ENCODE measurements at regions of chr11 and their contacts with region 1.

Region 1: GRCh38 chr11:59857444-59858434 is 8.5 kb downstream of the TCN1 start:
- DNase-seq: peak; percentile 67 to 80
- H3K4me3 ChIP-seq: no peak overlapping the region
- H3K27ac ChIP-seq: peak overlapping the region; percentile 78
- H3K4me1 ChIP-seq: peaks cover 33% of the 10 kb centered on the region
- H3K27me3 ChIP-seq: no peaks in the 10 kb centered on the region
- CTCF ChIP-seq: no peak

Region 2: DNA sequence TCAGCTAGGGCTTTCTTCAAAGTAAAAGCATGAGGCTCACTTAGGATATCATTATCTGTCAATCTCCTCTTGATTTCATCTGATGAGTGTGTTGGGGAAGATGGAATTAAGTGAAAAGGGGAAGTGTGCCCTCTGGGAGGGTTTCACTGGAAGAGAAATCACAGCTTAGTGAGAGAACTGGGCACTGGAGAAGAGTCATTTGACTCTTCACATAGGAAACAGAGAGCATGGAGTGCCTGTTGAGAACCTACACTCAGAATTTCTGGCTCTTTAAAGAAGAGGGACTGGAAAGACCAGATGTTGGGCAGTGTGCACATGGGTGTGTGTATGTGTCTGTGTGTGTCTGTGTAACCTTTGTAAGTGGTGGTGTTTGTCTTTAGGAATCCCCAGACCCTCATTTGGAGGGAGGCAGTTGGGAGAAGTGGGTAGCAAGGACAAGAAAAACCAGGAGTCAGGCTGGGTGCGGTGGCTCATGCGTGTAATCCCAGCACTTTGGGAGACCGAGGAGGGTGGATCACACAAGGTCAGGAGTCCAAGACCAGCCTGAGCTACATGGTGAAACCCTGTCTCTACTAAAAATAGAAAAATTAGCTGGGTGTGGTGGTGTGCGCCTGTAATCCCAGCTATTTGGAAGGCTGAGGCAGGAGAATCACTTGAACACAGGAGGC is 92.5 kb before region 1 on chr11:
- CTCF ChIA-PET with region 1: no interaction called
- POLR2A ChIA-PET with region 1: no interaction called
- intact Hi-C with region 1: no loop called
- DNase-seq: no peak
- H3K4me3 ChIP-seq: no peak overlapping the region
- H3K27ac ChIP-seq: no peak overlapping the region
- H3K4me1 ChIP-seq: no peaks in the 10 kb centered on the region
- H3K27me3 ChIP-seq: no peaks in the 10 kb centered on the region
- CTCF ChIP-seq: no peak

Region 3: DNA sequence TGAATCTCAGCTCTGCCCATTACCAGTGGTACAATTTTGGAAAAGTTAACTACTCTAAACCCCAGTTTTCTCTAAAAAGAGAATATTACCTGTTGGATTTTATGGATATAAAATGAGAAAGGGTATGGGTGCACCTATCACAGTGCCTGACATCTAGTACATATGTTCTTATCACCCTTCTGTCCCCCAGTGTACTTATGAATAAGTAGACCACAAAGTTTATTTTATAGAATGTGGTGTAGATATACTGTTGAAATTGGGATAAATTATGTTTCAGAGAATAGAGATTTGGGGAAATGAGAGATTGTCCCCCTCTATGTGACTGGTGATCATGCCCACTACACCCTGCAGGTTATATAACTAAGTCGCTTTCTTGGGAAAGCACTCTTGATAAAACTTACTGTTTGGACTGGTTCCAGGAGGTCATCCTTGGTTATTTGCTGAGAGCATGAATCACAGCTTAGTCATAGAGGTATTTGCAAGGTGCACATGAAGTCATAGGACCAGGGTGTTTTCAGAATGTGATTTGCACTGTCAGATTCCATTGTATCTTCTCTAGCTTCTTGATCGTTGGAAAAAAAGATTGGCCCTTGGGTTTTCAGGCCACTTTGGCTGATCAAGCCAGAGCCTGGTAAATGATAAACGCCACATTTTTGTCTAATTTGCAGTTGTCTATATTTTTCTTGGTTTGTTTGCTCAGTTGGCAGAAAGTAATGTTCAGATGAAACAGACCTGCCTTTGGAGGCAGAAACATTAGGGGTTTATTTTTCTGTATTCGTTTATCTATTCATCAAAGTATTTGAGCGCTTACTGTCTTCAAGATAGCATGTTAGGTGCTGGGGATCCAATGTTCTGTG is 81.3 kb before region 1 on chr11:
- CTCF ChIA-PET with region 1: no interaction called
- POLR2A ChIA-PET with region 1: no interaction called
- intact Hi-C with region 1: loop called (anchors 2 kb)
- DNase-seq: peak; percentile 57 to 97
- H3K4me3 ChIP-seq: no peak overlapping the region
- H3K27ac ChIP-seq: peak overlapping the region; percentile 28
- H3K4me1 ChIP-seq: peaks cover 48% of the 10 kb centered on the region
- H3K27me3 ChIP-seq: no peaks in the 10 kb centered on the region
- CTCF ChIP-seq: no peak

Region 4: GRCh38 chr11:59810189-59810910 is 47.4 kb before region 1 on chr11 and contains the start of gene MRPL16:
- CTCF ChIA-PET with region 1: no interaction called
- POLR2A ChIA-PET with region 1: no interaction called
- intact Hi-C with region 1: loop called (anchors 5 kb)
- DNase-seq: peak; percentile 89 to 92
- H3K4me3 ChIP-seq: peak within 1 kb of the TSS; percentile 73
- H3K27ac ChIP-seq: peak within 1 kb of the TSS; percentile 58
- H3K4me1 ChIP-seq: peaks cover 14% of the 10 kb centered on the region; the same call in 1 of the 2 replicates
- H3K27me3 ChIP-seq: no peaks in the 10 kb centered on the region
- CTCF ChIP-seq: peak; percentile 57; the same call in 1 of the 2 replicates
- total RNA-seq, gene MRPL16: 64.7 and 82.0 TPM in 2 replicates

Region 5: DNA sequence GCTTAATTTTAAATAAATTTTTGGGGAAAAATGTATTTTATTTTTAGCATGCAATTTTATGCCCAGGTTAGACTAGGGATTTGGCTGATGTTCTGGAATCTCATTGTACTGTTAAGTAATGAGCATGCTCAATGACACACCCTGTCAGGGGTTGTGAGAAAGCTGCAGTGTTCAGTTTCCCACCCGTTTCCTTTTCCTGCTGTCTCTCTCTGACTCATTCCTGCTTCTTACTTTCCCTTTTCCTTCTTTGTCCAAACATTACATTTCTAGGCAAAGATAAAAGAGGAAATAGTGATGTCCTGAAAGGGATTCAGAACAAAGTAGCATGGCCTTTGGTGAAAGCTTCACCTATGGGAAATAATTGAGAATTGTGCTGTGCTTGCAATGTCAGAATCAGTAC is 43.6 kb after region 1 on chr11:
- CTCF ChIA-PET with region 1: interaction called, 3 read pairs
- POLR2A ChIA-PET with region 1: no interaction called
- intact Hi-C with region 1: loop called (anchors 1 kb)
- DNase-seq: peak; percentile 56 to 60
- H3K4me3 ChIP-seq: no peak overlapping the region
- H3K27ac ChIP-seq: peak overlapping the region; percentile 20; the same call in 1 of the 2 replicates
- H3K4me1 ChIP-seq: no peaks in the 10 kb centered on the region
- H3K27me3 ChIP-seq: no peaks in the 10 kb centered on the region; the same call in 1 of the 2 replicates
- CTCF ChIP-seq: no peak

Region 6: GRCh38 chr11:59957094-59957493 is 99.4 kb after region 1 on chr11:
- CTCF ChIA-PET with region 1: no interaction called
- POLR2A ChIA-PET with region 1: interaction called, 25 read pairs
- intact Hi-C with region 1: no loop called
- DNase-seq: no peak
- H3K4me3 ChIP-seq: no peak overlapping the region
- H3K27ac ChIP-seq: no peak overlapping the region
- H3K4me1 ChIP-seq: no peaks in the 10 kb centered on the region
- H3K27me3 ChIP-seq: no peaks in the 10 kb centered on the region
- CTCF ChIP-seq: no peak